ENCODE measurements at regions of chr9 and their contacts with region 1.

Region 1: DNA sequence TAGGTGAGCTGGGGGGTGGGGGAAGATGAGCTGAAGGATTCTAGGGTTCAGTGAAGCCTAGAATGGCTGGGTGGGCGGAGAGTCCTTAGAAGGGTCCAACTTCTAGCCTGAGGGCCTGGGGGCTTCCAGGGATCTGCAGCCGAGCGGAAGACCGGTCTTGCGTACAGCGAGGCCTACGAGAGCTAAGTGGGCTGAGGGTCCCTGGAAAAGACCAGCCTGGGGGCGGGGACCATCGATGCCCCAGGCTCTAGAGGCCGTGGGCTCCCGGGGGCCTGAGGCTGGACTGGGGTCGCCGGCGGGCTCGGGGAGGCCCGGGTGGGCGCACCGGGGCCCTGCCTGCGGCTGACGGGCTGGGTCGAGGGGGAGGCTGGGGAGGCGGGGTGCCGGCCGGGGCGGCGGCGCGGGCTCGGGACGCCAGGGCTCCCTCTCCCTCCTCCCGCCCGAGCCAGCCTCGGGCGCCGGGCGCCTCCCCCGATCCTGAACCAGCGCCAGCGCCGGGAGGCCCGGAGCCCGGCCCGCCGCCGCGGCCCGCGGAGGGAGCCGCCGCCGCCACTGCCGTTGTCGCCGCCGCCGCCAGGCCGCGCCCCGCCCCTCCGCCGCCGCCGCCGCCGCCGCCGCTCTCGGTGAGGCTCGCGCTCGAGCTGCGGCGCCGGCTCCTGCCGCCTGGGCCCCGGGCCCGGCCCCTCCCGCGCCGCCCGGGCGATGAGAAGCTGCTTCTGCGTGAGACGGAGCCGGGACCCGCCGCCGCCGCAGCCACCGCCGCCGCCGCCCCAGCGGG is at the start of gene MVB12B:
- DNase-seq: peak; percentile 8
- H3K4me3 ChIP-seq: peak within 1 kb of the TSS; percentile 45 to 51
- H3K27ac ChIP-seq: peak within 1 kb of the TSS; percentile 79 to 81
- H3K4me1 ChIP-seq: peaks cover 7% of the 10 kb centered on the region
- H3K27me3 ChIP-seq: no peaks in the 10 kb centered on the region
- CTCF ChIP-seq: no peak
- POLR2A ChIP-seq: no peak
- total RNA-seq, gene MVB12B: 17.3 to 28.4 TPM

Region 2: DNA sequence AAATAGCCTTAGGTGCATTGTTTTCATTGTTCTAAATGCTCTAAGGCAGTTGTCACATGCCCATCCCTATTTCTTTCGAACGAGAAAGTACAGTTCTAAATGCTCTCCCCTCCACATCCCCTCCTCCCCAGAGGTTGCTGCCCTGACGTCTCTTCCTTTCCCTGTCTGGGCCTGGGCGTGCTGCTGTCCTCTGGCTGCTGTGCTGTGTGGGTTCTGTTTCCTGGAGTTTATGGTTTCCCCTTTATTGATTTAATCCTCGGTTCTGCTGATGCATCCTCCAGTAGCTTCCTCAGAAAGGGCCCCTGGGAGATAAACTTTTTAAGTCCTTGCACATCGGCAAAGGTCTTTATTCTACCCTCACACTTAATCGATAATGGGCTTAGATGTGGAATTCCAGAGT is 49.0 kb after region 1 on chr9:
- intact Hi-C with region 1: loop called (anchors 5 kb)
- DNase-seq: no peak
- H3K4me3 ChIP-seq: no peak overlapping the region
- H3K27ac ChIP-seq: peak overlapping the region in 1 of 2 donors; percentile 46
- H3K4me1 ChIP-seq: no peaks in the 10 kb centered on the region
- H3K27me3 ChIP-seq: no peaks in the 10 kb centered on the region
- CTCF ChIP-seq: no peak
- POLR2A ChIP-seq: no peak

Measured in prostate gland (tissue), 2 donors.